Breast epithelium (tissue), 4 donors: ENCODE measurements at regions of chr1 and their contacts with region 1.

Region 1: GRCh38 chr1:203480525-203481084 is 5.0 kb downstream of the PRELP start:
- DNase-seq: peak; percentile 74
- H3K4me3 ChIP-seq: peak overlapping the region; percentile 22 to 57 (median 53)
- H3K27ac ChIP-seq: peak overlapping the region; percentile 83 to 93
- H3K4me1 ChIP-seq: peaks cover 8 to 19% of the 10 kb centered on the region in 2 donors
- H3K27me3 ChIP-seq: no peaks in the 10 kb centered on the region
- CTCF ChIP-seq: no peak
- POLR2A ChIP-seq: no peak

Region 2: GRCh38 chr1:203368624-203369451 is 111.8 kb before region 1 on chr1:
- intact Hi-C with region 1: loop called (anchors 10 kb)
- DNase-seq: peak in 1 of 2 donors; percentile 70
- H3K4me3 ChIP-seq: no peak overlapping the region
- H3K27ac ChIP-seq: peak overlapping the region; percentile 64 to 80
- H3K4me1 ChIP-seq: peaks cover 0 to 3% of the 10 kb centered on the region in 2 donors
- H3K27me3 ChIP-seq: no peaks in the 10 kb centered on the region
- CTCF ChIP-seq: peak; percentile 30 to 50 (median 49)
- POLR2A ChIP-seq: no peak

Region 3: GRCh38 chr1:204341380-204341779 is 860.8 kb after region 1 on chr1:
- intact Hi-C with region 1: no loop called
- DNase-seq: no peak
- H3K4me3 ChIP-seq: no peak overlapping the region
- H3K27ac ChIP-seq: no peak overlapping the region
- H3K4me1 ChIP-seq: no peaks in the 10 kb centered on the region
- H3K27me3 ChIP-seq: no peaks in the 10 kb centered on the region
- CTCF ChIP-seq: no peak
- POLR2A ChIP-seq: no peak